AG04449 (cell line): ENCODE measurements at regions of chr15 and their contacts with region 1.

Region 1: GRCh38 chr15:61834076-61834697 is 226.1 kb downstream of the VPS13C start:
- DNase-seq: peak; percentile 23
- H3K4me3 ChIP-seq: no peak overlapping the region
- CTCF ChIP-seq: peak; percentile 91

Region 2: DNA sequence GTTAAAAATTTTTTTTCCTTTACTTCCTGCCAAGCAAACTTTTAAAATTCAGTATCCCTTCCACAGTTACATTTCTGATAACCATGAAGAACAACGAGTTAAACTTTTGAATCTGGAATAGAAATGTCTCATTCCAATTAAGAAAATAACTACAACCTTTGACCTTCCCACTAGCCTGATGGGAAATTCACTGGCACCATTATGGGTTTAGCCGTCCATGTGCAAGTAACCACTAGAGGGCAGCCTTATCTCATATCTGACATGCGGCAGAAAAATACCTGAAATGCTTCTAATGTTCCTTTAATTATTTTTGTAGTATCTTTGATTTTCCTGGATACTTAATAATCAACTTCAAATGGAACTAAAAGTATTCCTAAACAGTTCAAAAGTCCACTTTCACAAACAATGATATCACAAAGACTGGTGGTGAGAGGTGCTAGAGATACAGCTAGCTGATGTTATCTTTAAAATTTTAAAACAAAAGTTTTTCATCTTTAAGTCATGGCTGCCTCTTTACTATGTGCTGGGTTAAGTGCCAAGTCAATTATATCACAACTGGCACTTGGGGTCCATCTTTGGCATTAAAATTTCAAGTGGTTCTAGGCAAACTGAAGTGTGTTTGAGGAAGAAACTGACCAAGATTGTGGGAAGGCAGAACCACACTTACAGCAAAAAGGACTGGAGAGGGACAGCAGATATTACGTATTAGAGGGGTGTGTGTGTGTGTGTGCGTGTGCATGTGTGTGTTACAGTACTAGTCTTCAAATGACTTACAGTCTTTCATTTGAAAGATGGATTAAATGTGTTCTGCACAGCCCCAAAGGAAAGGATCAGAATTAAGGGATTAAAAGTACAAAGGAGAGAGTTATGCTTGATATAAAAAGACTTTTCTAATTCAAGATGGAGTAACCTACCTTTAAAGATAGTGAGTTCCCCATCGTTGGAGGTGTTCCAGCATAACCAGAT is 1248.2 kb before region 1 on chr15:
- CTCF ChIA-PET with region 1: interaction called, 60 read pairs
- POLR2A ChIA-PET with region 1: no interaction called
- DNase-seq: no peak
- H3K4me3 ChIP-seq: no peak overlapping the region
- CTCF ChIP-seq: peak; percentile 72

Region 3: GRCh38 chr15:61169904-61170695 is 664.1 kb before region 1 on chr15:
- CTCF ChIA-PET with region 1: interaction called, 42 read pairs
- POLR2A ChIA-PET with region 1: no interaction called
- DNase-seq: no peak
- H3K4me3 ChIP-seq: no peak overlapping the region
- CTCF ChIP-seq: no peak

Region 4: DNA sequence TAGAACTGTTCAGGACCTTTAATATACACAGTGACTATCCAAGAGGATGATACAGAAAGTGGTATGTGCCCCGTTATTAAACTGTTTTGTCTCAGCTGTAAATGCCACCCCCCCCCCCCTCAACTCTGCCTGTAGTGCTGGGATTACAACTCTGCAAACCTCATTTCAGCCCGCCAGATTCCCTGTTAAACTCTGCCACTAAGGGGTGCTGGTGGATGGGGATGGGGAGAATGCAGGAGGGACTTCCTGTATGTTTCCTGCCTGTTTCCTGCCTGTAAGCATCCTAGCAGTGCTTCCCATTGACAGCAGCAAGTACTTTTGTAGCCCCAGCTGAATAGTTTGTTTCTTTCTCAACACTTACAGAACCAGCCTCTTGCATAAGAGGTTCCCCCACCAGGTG is 303.4 kb before region 1 on chr15:
- CTCF ChIA-PET with region 1: interaction called, 12 read pairs
- POLR2A ChIA-PET with region 1: no interaction called
- DNase-seq: no peak
- H3K4me3 ChIP-seq: no peak overlapping the region
- CTCF ChIP-seq: no peak

Region 5: GRCh38 chr15:61851955-61852354 is 17.8 kb after region 1 on chr15:
- CTCF ChIA-PET with region 1: interaction called, 18 read pairs
- POLR2A ChIA-PET with region 1: no interaction called
- DNase-seq: no peak
- H3K4me3 ChIP-seq: no peak overlapping the region
- CTCF ChIP-seq: no peak

Region 6: DNA sequence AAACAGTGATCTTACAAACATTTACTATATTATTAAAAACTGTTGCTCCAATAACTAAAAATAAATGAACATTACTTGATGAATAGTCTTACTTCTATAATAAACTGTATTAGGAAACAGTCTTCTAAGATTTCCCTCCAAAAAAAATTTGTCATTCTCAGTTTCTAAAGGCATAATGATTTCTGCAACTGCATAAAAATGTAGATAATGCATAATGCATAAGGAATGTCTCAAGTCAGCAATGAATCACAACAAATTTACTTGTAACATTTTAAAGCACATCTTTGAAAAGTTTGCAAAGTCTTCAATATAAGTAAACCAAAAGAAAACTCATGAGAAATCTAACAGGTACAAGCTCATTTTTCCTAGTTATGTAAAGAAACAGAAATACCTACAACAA is 112.6 kb after region 1 on chr15:
- CTCF ChIA-PET with region 1: no interaction called
- POLR2A ChIA-PET with region 1: no interaction called
- DNase-seq: no peak
- H3K4me3 ChIP-seq: no peak overlapping the region
- CTCF ChIP-seq: no peak